ENCODE measurements at regions of chr10 and their contacts with region 1.

Region 1: DNA sequence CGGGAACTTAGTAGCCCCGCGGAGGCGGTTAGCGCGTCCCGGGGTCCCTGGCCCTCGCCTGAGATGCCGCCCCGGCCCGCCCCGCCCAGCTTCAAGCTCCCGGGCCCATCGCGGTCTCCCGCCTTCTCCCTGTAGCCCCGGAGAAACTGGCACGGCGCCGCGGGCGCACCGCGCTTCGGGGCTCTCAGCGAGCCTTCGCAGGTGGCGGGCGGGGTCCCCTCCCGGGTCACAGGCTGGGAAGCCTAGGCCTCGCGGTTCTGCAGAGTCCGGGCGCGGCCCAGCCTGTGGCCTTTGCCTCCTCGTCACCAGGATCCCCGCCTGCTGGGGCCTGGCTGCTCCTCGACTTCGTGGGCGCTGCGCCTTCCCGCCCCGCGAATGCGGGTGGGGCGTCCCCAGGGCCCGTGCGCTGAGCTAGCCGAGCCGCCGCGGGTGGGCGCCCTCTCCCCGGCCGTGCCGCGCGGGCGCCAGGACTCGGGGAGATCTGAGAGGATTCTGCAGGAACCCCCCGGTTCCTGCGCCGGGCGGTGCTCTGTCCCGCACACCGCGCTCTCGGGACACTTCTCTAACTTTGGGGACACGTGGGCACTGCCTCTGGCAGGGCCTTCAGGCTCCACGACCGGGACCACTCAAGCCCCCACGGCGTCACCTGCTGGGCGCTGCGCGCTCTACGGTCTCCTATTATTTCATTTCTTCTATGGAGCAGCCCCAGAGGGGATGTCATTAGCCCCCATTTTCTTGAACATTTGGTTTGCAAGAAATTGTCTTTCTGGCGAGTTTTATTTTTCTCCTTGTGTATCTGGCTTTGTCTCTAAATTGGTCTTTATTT is 682 bp upstream of the RGS10 start:
- DNase-seq: peak; percentile 65 to 77 (median 74)
- ATAC-seq: peak; percentile 66
- H3K4me3 ChIP-seq: peak overlapping the region; percentile 70
- H3K27ac ChIP-seq: peak overlapping the region; percentile 75
- H3K4me1 ChIP-seq: peaks cover 17 to 52% of the 10 kb centered on the region in 2 experiments
- H3K27me3 ChIP-seq: no peaks in the 10 kb centered on the region
- CTCF ChIP-seq: peak; percentile 56 to 67 (median 66)
- EP300 ChIP-seq: no peak
- POLR2A ChIP-seq: peak; percentile 21
- RAD21 ChIP-seq: peak; percentile 21 to 58; a peak in 3 of 4 replicates

Region 2: DNA sequence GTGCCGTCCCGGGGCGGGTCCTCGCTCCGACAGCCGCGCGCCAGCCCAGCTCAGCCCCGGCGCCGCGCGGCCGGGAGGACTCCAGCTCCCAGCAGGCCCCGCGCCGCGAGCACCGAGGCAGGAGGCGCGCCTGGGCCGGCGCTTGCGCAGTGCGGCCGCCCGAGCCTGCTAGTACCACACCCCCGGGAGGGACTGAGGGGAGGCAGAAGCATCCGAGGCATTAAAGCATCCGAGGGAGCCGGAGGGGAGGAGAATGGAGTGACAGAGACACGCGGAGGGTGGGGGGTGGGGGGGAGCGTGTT is 335.9 kb before region 1 on chr10 and contains the start of gene GRK5:
- CTCF ChIA-PET with region 1: no interaction called
- POLR2A ChIA-PET with region 1: interaction called, 3 read pairs
- in situ Hi-C with region 1: no loop called
- intact Hi-C with region 1: loop called (anchors 5 kb)
- DNase-seq: peak; percentile 89 to 93 (median 92)
- ATAC-seq: peak; percentile 97
- H3K4me3 ChIP-seq: peak within 1 kb of the TSS; percentile 71
- H3K27ac ChIP-seq: peak within 1 kb of the TSS; percentile 80
- H3K4me1 ChIP-seq: peaks cover 8 to 21% of the 10 kb centered on the region in 2 experiments
- H3K27me3 ChIP-seq: no peaks in the 10 kb centered on the region
- CTCF ChIP-seq: no peak
- EP300 ChIP-seq: no peak
- POLR2A ChIP-seq: no peak
- RAD21 ChIP-seq: no peak
- polyA plus RNA-seq, gene GRK5: not detected

Region 3: GRCh38 chr10:119428789-119429188 is 114.4 kb before region 1 on chr10:
- CTCF ChIA-PET with region 1: no interaction called
- POLR2A ChIA-PET with region 1: no interaction called
- in situ Hi-C with region 1: no loop called
- intact Hi-C with region 1: no loop called
- DNase-seq: peak in 3 of 4 experiments; percentile 11 to 25 (median 16)
- ATAC-seq: no peak
- H3K4me3 ChIP-seq: no peak overlapping the region
- H3K27ac ChIP-seq: no peak overlapping the region
- H3K4me1 ChIP-seq: peaks cover 6 to 15% of the 10 kb centered on the region in 2 experiments; a peak in 3 of 5 replicates
- H3K27me3 ChIP-seq: peaks cover 0 to 2% of the 10 kb centered on the region in 2 experiments; a peak in 1 of 5 replicates
- CTCF ChIP-seq: no peak
- EP300 ChIP-seq: no peak
- POLR2A ChIP-seq: no peak
- RAD21 ChIP-seq: no peak

Region 4: DNA sequence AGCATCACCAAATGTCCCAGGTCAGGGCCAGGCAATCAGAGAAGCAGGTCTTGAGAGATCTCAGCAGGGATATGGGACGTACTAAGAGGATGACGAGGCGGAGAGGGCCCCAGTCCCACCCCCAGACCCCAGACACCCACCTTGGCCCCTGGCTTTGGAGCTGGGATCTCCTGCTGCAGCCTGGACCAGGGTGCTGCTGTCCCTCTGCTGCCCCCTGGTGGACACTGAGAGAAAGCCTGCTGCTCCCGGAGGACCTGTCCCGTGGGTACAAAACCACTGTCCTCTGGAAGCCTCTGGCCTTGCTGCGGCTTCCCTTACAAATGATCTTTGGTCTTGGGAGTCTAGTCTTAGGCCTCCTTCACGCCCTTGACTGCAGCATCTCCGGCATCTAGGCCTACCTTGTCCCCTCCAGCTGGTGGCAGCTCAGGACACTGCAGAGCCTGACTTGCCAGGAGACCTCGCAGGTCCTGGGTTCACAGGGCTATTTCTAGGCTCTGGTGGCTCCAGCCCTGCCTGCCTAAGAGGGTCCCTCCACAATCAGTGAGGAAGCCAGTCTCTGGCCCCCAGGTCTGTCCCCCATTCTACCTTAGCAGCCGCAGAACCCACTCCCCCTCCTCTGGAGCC is 97.8 kb before region 1 on chr10:
- CTCF ChIA-PET with region 1: no interaction called
- POLR2A ChIA-PET with region 1: interaction called, 3 read pairs
- in situ Hi-C with region 1: no loop called
- intact Hi-C with region 1: loop called (anchors 10 kb)
- DNase-seq: peak; percentile 76 to 83 (median 82)
- ATAC-seq: peak; percentile 92
- H3K4me3 ChIP-seq: no peak overlapping the region
- H3K27ac ChIP-seq: no peak overlapping the region
- H3K4me1 ChIP-seq: peaks cover 0 to 17% of the 10 kb centered on the region in 2 experiments; a peak in 2 of 5 replicates
- H3K27me3 ChIP-seq: peaks cover 0 to 59% of the 10 kb centered on the region in 2 experiments; a peak in 3 of 5 replicates
- CTCF ChIP-seq: peak; percentile 78 to 81 (median 78)
- EP300 ChIP-seq: no peak
- POLR2A ChIP-seq: no peak
- RAD21 ChIP-seq: peak; percentile 65 to 74

Region 5: GRCh38 chr10:119496273-119496672 is 46.9 kb before region 1 on chr10:
- CTCF ChIA-PET with region 1: no interaction called
- POLR2A ChIA-PET with region 1: no interaction called
- in situ Hi-C with region 1: no loop called
- intact Hi-C with region 1: loop called (anchors 5 kb)
- DNase-seq: no peak
- ATAC-seq: no peak
- H3K4me3 ChIP-seq: no peak overlapping the region
- H3K27ac ChIP-seq: no peak overlapping the region
- H3K4me1 ChIP-seq: no peaks in the 10 kb centered on the region; a peak in 1 of 5 replicates
- H3K27me3 ChIP-seq: no peaks in the 10 kb centered on the region
- CTCF ChIP-seq: no peak
- EP300 ChIP-seq: no peak
- POLR2A ChIP-seq: no peak
- RAD21 ChIP-seq: no peak

Region 6: DNA sequence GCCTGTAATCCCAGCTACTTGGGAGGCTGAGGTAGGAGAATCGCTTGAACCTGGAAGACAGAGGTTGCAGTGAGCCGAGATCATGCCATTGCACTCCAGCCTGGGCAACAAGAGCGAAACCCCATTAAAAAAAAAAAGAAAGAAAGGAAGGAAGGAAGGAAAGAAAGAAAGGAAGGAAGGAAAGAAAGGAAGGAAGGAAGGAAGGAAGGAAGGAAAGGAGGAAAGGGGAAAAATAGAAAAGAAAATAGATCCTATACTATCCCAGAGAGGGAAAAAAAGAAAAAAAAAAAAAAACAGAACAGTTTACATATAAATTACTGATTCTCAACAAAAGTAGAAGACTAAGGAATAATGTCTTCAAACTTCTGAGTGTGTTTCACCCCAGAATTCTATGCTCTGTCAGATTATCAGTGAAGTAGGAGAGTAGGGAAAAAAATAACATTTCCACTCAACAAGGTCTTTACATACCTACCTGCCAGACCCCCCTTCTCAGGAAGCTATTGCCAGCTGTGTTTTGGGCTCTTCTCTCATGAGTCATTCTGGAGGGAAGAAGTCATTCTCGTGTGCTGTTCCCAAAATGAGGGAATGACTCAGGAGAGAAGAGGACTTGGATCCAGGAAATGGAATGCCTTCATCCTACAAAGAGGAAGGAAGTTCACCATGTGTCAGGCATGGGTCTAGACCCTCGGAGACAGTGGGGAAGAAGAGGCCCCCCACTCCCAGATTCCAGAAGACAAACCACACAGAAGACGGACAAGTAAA is 21.6 kb before region 1 on chr10:
- CTCF ChIA-PET with region 1: no interaction called
- POLR2A ChIA-PET with region 1: interaction called, 5 read pairs
- in situ Hi-C with region 1: no loop called
- intact Hi-C with region 1: loop called (anchors 2 kb)
- DNase-seq: no peak
- ATAC-seq: no peak
- H3K4me3 ChIP-seq: no peak overlapping the region
- H3K27ac ChIP-seq: peak overlapping the region; percentile 67
- H3K4me1 ChIP-seq: peaks cover 43 to 44% of the 10 kb centered on the region in 2 experiments
- H3K27me3 ChIP-seq: no peaks in the 10 kb centered on the region
- CTCF ChIP-seq: no peak
- EP300 ChIP-seq: no peak
- POLR2A ChIP-seq: no peak
- RAD21 ChIP-seq: no peak

Region 7: DNA sequence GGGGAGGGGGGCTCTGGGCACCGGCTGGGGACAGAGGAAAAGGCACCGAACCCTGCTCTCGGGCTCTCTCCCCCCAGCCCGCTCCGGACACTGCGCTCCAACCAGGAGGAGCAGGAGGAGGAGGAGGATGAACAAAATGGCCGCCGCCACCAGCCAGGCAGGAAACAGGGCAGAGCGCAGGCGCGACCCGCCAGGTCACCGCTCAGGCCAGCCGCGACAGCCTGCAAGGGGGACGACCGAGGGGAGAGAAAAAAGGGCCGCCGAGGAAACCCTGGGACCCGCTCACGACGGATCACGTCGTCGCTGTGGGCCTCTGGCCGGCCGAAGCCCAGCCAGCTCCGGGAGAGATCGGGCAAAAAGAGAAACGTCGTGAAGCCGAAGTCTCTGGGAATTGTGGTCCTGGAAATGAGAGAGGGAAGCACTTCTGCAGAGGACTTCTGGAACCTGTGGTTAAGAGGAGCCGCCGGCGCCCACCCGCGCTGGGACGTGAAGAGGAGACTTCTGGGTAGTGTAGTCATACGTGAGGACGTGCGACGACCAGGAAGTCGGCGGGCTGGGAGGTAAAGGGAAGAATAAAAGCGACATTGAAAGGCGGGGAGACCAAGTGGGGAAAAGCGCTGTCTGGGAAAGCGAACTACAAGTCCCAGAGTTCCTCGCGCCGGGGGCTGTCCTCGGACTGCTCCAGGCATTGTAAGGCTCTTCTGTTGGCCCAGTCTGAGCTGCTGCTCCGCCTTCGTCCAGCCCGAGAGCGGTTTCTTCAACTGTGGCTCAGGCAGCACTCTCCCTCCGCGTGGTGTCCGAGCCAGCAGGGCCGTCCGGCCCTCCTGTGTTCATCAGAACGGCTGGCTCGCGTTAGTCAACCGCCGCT is 53.6 kb after region 1 on chr10 and contains the start of gene TIAL1:
- CTCF ChIA-PET with region 1: interaction called, 4 read pairs
- POLR2A ChIA-PET with region 1: no interaction called
- in situ Hi-C with region 1: no loop called
- intact Hi-C with region 1: loop called (anchors 1 kb)
- DNase-seq: peak; percentile 75 to 97 (median 82)
- ATAC-seq: peak; percentile 91
- H3K4me3 ChIP-seq: peak within 1 kb of the TSS; percentile 96
- H3K27ac ChIP-seq: peak within 1 kb of the TSS; percentile 99
- H3K4me1 ChIP-seq: peaks cover 3 to 8% of the 10 kb centered on the region in 2 experiments; a peak in 4 of 5 replicates
- H3K27me3 ChIP-seq: no peaks in the 10 kb centered on the region
- CTCF ChIP-seq: no peak
- EP300 ChIP-seq: no peak
- POLR2A ChIP-seq: peak; percentile 92
- RAD21 ChIP-seq: no peak
- polyA plus RNA-seq, gene TIAL1: 22.5 to 30.8 TPM

Region 8: GRCh38 chr10:119650692-119651513 is 107.7 kb after region 1 on chr10 and contains the start of gene BAG3:
- CTCF ChIA-PET with region 1: no interaction called
- POLR2A ChIA-PET with region 1: no interaction called
- in situ Hi-C with region 1: no loop called
- intact Hi-C with region 1: loop called (anchors 10 kb)
- DNase-seq: peak; percentile 80 to 90 (median 84)
- ATAC-seq: peak; percentile 88
- H3K4me3 ChIP-seq: peak within 1 kb of the TSS; percentile 89
- H3K27ac ChIP-seq: peak within 1 kb of the TSS; percentile 96
- H3K4me1 ChIP-seq: peaks cover 9 to 24% of the 10 kb centered on the region in 2 experiments; a peak in 4 of 5 replicates
- H3K27me3 ChIP-seq: no peaks in the 10 kb centered on the region
- CTCF ChIP-seq: no peak
- EP300 ChIP-seq: peak; percentile 44; the same call in 1 of the 2 replicates
- POLR2A ChIP-seq: peak; percentile 86
- RAD21 ChIP-seq: no peak
- polyA plus RNA-seq, gene BAG3: 3.9 to 4.1 TPM